ENCODE measurements at regions of chr18 and their contacts with region 1.

Region 1: DNA sequence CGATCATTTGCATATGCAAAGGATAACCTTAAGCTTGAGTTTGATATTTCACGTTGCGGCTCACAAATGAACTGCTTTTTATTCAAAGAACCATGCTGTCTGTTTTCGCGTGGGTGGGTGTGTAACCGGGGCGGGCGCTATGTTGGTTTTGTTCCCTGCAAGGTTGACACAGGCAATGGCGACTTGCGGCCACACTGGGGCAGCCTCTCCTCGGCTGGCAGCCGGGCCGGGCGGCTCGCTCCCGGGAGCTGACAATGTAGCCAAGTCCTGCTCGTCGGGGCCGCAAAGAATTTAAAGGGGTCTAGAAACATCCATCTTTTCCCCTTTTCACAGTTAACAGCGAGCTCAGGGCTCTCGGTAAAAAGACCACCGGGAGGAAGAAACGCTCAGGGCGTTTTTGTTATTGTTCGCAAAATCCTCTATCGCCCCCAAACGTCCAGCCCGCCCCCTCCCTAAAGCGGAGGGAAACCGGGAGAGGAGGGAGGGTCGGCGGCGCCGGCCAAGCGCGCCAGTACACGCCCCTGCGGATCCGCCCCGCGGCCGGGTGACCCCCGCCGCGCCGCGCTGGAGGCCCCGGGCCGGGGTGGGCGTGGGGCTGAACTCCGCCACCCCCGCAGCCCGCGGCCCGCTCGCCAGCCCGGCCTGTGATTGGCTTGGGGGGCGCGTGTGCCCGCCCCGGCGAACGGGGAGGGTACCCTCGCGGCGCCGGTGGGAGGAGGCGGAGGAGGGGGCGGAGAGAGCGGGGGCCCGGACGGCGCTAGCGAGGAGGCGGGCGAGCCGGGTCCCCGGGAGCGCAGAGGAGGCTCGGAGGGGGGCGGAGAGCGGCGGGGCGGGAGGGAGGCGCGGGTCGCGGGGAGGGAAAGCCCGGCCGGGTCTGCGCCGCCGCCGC is at the start of gene NEDD4L:
- DNase-seq: peak; percentile 81 to 91 (median 81)
- ATAC-seq: peak; percentile 85 to 94 (median 92)
- H3K4me3 ChIP-seq: peak within 1 kb of the TSS; percentile 65 to 89 (median 82)
- H3K27ac ChIP-seq: peak within 1 kb of the TSS in 11 of 12 donors; percentile 46 to 82 (median 67)
- H3K4me1 ChIP-seq: peaks cover 0 to 23% (median 7%) of the 10 kb centered on the region in 12 donors
- H3K27me3 ChIP-seq: peaks cover 0 to 12% (median 0%) of the 10 kb centered on the region in 9 donors
- CTCF ChIP-seq: peak; percentile 74 to 94 (median 83)
- POLR2A ChIP-seq: no peak
- total RNA-seq, gene NEDD4L: 33.8 to 64.1 (median 54.9) TPM

Region 2: GRCh38 chr18:57630002-57630753 is 413.6 kb before region 1 on chr18:
- intact Hi-C with region 1: loop called in 6 of 10 experiments (anchors 5 to 10 kb)
- DNase-seq: peak; percentile 97 to 98 (median 98)
- ATAC-seq: peak; percentile 98 to 99 (median 98)
- H3K4me3 ChIP-seq: peak overlapping the region; percentile 50 to 81 (median 70)
- H3K27ac ChIP-seq: peak overlapping the region in 11 of 12 donors; percentile 42 to 90 (median 83)
- H3K4me1 ChIP-seq: peaks cover 0 to 18% (median 9%) of the 10 kb centered on the region in 12 donors
- H3K27me3 ChIP-seq: no peaks in the 10 kb centered on the region
- CTCF ChIP-seq: peak; percentile 56 to 95 (median 70)
- POLR2A ChIP-seq: peak in 1 of 2 donors; percentile 40

Region 3: GRCh38 chr18:57881818-57882413 is 161.8 kb before region 1 on chr18:
- intact Hi-C with region 1: loop called in 4 of 10 experiments (anchors 5 to 10 kb)
- DNase-seq: peak; percentile 35 to 65 (median 62)
- ATAC-seq: peak; percentile 77 to 94 (median 88)
- H3K4me3 ChIP-seq: no peak overlapping the region
- H3K27ac ChIP-seq: no peak overlapping the region
- H3K4me1 ChIP-seq: peaks cover 0 to 5% (median 0%) of the 10 kb centered on the region in 12 donors
- H3K27me3 ChIP-seq: no peaks in the 10 kb centered on the region
- CTCF ChIP-seq: peak; percentile 83 to 95 (median 89)
- POLR2A ChIP-seq: no peak

Region 4: GRCh38 chr18:57915865-57916582 is 127.7 kb before region 1 on chr18:
- intact Hi-C with region 1: no loop called
- DNase-seq: no peak
- ATAC-seq: peak in 3 of 4 donors; percentile 14 to 82 (median 20)
- H3K4me3 ChIP-seq: no peak overlapping the region
- H3K27ac ChIP-seq: peak overlapping the region in 6 of 12 donors; percentile 23 to 60 (median 28)
- H3K4me1 ChIP-seq: peaks cover 0 to 10% (median 3%) of the 10 kb centered on the region in 12 donors
- H3K27me3 ChIP-seq: no peaks in the 10 kb centered on the region
- CTCF ChIP-seq: no peak
- POLR2A ChIP-seq: no peak

Region 5: GRCh38 chr18:58128381-58129374 is 84.9 kb after region 1 on chr18:
- intact Hi-C with region 1: loop called in 6 of 10 experiments (anchors 2 to 5 kb)
- DNase-seq: no peak
- ATAC-seq: no peak
- H3K4me3 ChIP-seq: no peak overlapping the region
- H3K27ac ChIP-seq: no peak overlapping the region
- H3K4me1 ChIP-seq: no peaks in the 10 kb centered on the region
- H3K27me3 ChIP-seq: no peaks in the 10 kb centered on the region
- CTCF ChIP-seq: no peak
- POLR2A ChIP-seq: no peak

Region 6: DNA sequence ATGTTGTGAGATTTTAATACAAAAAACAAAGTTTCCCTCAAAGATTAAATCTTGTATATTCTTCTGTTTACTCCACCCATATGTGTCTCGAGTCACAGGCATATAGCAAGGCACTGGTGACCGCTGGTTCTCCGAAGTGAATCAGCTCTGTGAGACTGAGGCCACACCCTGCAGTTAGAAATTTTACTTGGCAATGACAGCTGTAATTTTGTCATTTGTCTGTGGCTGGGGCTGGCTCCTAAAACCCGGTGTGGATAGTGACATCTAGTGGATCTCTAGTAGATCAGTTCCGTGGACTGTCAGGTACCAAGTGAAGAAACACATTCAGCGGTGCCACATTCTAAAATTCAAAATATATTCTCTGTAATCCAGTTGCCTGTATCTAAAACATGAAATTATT is 278.3 kb after region 1 on chr18:
- intact Hi-C with region 1: loop called in 5 of 10 experiments (anchors 5 to 10 kb)
- DNase-seq: peak in 4 of 5 donors; percentile 66 to 79 (median 74)
- ATAC-seq: peak; percentile 70 to 95 (median 94)
- H3K4me3 ChIP-seq: peak overlapping the region in 5 of 12 donors; percentile 3 to 35 (median 19)
- H3K27ac ChIP-seq: peak overlapping the region in 8 of 12 donors; percentile 9 to 69 (median 44)
- H3K4me1 ChIP-seq: peaks cover 0 to 30% (median 13%) of the 10 kb centered on the region in 12 donors
- H3K27me3 ChIP-seq: no peaks in the 10 kb centered on the region
- CTCF ChIP-seq: peak in 11 of 12 donors; percentile 50 to 83 (median 65)
- POLR2A ChIP-seq: no peak

Region 7: GRCh38 chr18:58493516-58494253 is 449.9 kb after region 1 on chr18:
- intact Hi-C with region 1: loop called in 5 of 10 experiments (anchors 5 to 10 kb)
- DNase-seq: peak; percentile 65 to 76 (median 73)
- ATAC-seq: peak; percentile 76 to 90 (median 83)
- H3K4me3 ChIP-seq: peak overlapping the region in 6 of 12 donors; percentile 15 to 46 (median 28)
- H3K27ac ChIP-seq: peak overlapping the region in 11 of 12 donors; percentile 43 to 73 (median 61)
- H3K4me1 ChIP-seq: peaks cover 0 to 32% (median 15%) of the 10 kb centered on the region in 12 donors
- H3K27me3 ChIP-seq: peaks cover 0 to 5% (median 0%) of the 10 kb centered on the region in 9 donors
- CTCF ChIP-seq: peak; percentile 74 to 95 (median 84)
- POLR2A ChIP-seq: no peak